ENCODE measurements at regions of chr1 and their contacts with region 1.

Region 1: GRCh38 chr1:159161001-159161718 is 10.3 kb upstream of the CADM3 start:
- DNase-seq: peak; percentile 50
- ATAC-seq: peak; percentile 95
- H3K4me3 ChIP-seq: no peak overlapping the region
- H3K27ac ChIP-seq: no peak overlapping the region
- H3K4me1 ChIP-seq: no peaks in the 10 kb centered on the region
- H3K27me3 ChIP-seq: peaks cover 11% of the 10 kb centered on the region
- CTCF ChIP-seq: peak; percentile 87 to 99 (median 95)
- POLR2A ChIP-seq: no peak
- RAD21 ChIP-seq: peak; percentile 91

Region 2: GRCh38 chr1:159132271-159132881 is 28.8 kb before region 1 on chr1:
- CTCF ChIA-PET with region 1: interaction called, 4 read pairs
- POLR2A ChIA-PET with region 1: no interaction called
- RAD21 ChIA-PET with region 1: no interaction called
- intact Hi-C with region 1: loop called (anchors 2 kb)
- DNase-seq: peak; percentile 42
- ATAC-seq: peak; percentile 65
- H3K4me3 ChIP-seq: no peak overlapping the region
- H3K27ac ChIP-seq: no peak overlapping the region
- H3K4me1 ChIP-seq: no peaks in the 10 kb centered on the region
- H3K27me3 ChIP-seq: peaks cover 21% of the 10 kb centered on the region
- CTCF ChIP-seq: peak; percentile 73 to 85 (median 84)
- POLR2A ChIP-seq: no peak
- RAD21 ChIP-seq: peak; percentile 80

Region 3: DNA sequence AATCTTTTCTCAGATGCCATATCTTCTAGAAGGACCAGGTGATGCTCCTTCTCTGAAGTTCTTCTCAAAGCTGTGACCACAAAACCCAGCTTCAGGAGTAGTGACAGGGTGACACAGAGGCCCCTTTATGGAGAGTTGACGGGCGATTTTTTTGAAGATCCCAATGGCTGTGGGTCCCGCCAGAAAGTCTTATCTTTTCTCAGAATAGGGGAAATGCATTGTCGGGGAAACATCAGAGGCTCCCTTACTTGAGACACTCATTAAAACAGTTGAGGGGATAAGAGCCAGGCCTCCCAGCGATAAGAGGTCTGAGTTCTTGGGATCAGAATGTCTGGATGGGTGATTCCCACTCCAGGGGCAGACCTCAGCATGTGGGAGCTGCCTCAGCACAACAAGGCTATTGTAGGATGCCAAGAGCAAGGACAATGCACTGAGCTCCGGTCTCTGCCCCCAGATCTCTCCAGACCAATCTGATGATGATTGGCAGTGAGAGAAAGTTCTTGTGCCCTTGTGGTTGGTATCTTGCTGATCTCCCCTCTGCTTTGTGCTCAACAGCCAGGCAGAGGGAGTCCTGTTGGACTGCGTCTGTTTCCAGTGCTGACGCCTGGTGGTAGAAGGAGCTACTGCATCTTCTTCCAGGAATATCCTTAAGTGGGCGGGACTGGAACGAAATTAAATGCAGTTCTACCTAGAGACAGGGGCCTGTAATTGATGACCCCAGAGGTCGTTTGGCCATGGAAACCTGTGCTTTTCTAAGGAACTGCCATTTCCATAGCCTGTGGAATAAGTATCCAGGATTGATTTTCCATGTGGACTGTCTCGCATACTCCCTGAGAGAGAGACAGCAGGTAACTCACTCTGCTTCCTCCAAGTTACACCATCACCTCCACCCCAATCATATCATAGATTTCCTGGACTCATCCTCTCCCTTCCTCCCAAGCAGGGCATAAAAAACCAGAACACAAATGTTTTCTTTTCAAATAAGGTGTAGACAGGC is 36.7 kb after region 1 on chr1:
- CTCF ChIA-PET with region 1: interaction called, 3 read pairs
- POLR2A ChIA-PET with region 1: no interaction called
- RAD21 ChIA-PET with region 1: no interaction called
- intact Hi-C with region 1: loop called (anchors 1 kb)
- DNase-seq: peak; percentile 57
- ATAC-seq: peak; percentile 96
- H3K4me3 ChIP-seq: no peak overlapping the region
- H3K27ac ChIP-seq: no peak overlapping the region
- H3K4me1 ChIP-seq: no peaks in the 10 kb centered on the region
- H3K27me3 ChIP-seq: peaks cover 13% of the 10 kb centered on the region; the same call in 1 of the 2 replicates
- CTCF ChIP-seq: peak; percentile 83 to 95 (median 89)
- POLR2A ChIP-seq: no peak
- RAD21 ChIP-seq: peak; percentile 57

Region 4: GRCh38 chr1:159214149-159214760 is 53.1 kb after region 1 on chr1:
- CTCF ChIA-PET with region 1: interaction called, 26 read pairs
- POLR2A ChIA-PET with region 1: no interaction called
- RAD21 ChIA-PET with region 1: no interaction called
- intact Hi-C with region 1: loop called (anchors 2 kb)
- DNase-seq: peak; percentile 10
- ATAC-seq: peak; percentile 86
- H3K4me3 ChIP-seq: no peak overlapping the region
- H3K27ac ChIP-seq: no peak overlapping the region
- H3K4me1 ChIP-seq: no peaks in the 10 kb centered on the region
- H3K27me3 ChIP-seq: peaks cover 4% of the 10 kb centered on the region; the same call in 1 of the 2 replicates
- CTCF ChIP-seq: peak; percentile 65 to 89 (median 84)
- POLR2A ChIP-seq: no peak
- RAD21 ChIP-seq: peak; percentile 61

Measured in HCT116 (cell line).